ENCODE measurements at regions of chr7 and their contacts with region 1.

Region 1: DNA sequence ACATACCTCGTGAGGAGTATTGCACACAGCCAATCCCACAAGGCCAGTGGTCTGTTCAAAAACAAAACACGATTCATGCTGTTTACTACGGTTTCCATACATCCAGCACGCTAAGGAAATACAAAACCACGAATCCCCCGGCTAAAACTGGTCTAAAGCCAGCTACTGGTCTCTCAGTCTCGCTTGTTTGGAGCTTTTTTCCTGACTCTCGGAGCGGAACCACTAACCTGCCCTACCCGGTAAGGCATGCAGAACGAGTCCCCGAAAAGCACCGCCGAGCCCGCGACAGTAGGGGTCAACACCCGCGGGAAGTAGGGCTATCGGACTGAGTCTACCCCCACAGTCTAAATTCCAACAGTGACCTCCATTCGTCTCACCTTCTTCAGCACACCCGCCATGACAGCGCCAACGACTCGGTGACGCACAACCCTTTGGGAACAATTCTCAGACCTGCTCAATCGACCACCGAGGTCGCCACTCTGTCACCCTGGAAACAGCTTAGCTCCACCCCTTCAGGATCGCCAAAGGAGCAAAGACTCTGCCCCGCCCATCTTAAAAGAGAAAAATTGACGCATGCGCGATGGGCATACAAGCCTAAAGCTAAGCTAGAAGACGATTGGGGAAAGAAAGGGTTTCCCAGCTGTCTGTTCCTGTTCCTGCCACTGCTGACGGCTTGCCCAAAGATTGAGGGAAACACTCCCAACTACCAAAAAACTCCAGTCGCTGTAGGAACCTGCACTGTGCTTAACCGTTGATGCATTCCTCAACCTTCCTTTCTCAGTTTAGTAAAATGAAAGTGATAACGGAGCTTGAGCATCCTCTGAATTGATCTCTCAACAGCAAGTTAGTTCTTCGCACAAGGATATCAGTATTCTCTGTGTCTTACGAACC is at the start of gene NDUFA5:
- DNase-seq: peak; percentile 90 to 100
- ATAC-seq: peak; percentile 97 to 100 (median 99)
- H3K4me3 ChIP-seq: peak within 1 kb of the TSS; percentile 61 to 92 (median 76)
- H3K27ac ChIP-seq: peak within 1 kb of the TSS; percentile 89 to 96 (median 92)
- H3K4me1 ChIP-seq: peaks cover 3 to 49% (median 39%) of the 10 kb centered on the region in 9 donors
- H3K27me3 ChIP-seq: no peaks in the 10 kb centered on the region
- CTCF ChIP-seq: no peak
- total RNA-seq, gene NDUFA5: 185 to 358 (median 281) TPM

Region 2: DNA sequence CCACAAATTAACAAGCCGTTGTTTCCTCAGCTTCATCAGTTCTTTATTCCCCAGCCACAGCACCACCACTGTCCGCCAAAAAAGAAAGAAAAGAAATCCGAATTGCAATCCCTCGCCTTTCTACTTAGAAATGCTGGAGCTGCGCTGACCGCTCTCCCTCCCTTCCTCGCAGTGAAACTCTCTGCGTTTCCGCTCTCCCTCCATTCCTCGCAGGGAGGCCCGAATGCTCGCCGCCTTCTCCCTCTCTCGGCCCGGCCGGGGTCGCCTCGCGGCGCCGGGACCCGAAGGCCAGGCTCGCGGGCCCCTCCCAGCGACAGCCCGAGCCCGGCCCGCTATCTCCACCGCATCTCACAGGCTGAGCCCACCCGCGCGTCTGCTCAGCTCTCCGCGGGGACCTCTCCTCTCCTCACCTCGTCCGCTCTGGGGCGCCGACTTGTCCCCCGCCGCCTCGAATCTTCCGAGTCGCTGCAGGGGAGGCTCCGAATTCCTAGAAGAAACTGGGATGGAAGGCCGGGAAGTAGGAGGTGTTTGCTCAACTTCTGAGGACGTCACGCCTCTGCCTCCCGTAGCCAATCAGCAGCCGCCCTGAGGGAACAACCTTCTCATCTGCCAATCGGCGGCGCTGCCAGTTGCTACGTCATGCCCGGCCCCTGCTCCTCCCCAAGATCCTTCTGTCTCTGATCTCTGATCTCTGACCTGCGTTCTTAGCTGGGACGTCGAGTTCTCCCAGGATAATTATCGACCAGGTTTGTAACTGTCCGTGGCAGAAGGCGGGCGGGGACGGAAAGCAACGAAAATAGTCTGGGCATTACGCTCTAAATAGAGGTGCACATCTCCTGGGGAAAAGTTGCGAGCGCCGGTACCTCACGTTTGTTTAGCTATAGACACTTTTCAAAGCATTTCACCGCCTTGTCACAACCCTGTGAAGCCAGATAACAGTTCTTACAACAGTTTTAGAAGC is 1413.6 kb before region 1 on chr7 and contains the start of gene AASS:
- intact Hi-C with region 1: loop called in 1 of 10 experiments (anchors 5 kb)
- DNase-seq: peak; percentile 98
- ATAC-seq: peak; percentile 98 to 100 (median 99)
- H3K4me3 ChIP-seq: peak within 1 kb of the TSS; percentile 58 to 96 (median 84)
- H3K27ac ChIP-seq: peak within 1 kb of the TSS; percentile 71 to 96 (median 92)
- H3K4me1 ChIP-seq: peaks cover 0 to 35% (median 19%) of the 10 kb centered on the region in 9 donors
- H3K27me3 ChIP-seq: peaks cover 0 to 10% (median 0%) of the 10 kb centered on the region in 7 donors
- CTCF ChIP-seq: peak in 1 of 9 donors; percentile 26
- total RNA-seq, gene AASS: 14.6 to 48.1 (median 29.1) TPM

Region 3: DNA sequence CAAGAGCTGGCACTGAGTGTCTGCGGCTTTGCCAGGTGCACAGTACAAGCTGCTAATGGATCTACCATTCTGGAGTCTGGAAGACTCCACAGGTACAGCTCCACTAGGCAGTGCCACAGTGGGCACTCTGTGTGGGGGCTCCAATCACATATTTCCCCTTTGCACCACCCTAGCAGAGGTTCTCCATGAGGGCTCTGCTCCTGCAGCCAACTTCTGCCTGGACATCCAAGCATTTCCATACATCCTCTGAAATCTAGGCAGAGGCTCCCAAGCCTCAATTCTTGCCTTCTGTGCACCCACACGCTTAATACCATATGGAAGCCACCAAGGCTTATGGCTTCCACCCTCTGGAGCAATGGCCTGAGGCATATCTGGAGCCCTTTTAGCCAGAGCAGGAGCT is 52.4 kb before region 1 on chr7:
- intact Hi-C with region 1: no loop called
- DNase-seq: no peak
- ATAC-seq: no peak
- H3K4me3 ChIP-seq: no peak overlapping the region
- H3K27ac ChIP-seq: no peak overlapping the region
- H3K4me1 ChIP-seq: no peaks in the 10 kb centered on the region
- H3K27me3 ChIP-seq: no peaks in the 10 kb centered on the region
- CTCF ChIP-seq: no peak

Region 4: GRCh38 chr7:123534383-123535260 is 23.0 kb before region 1 on chr7 and contains the start of gene IQUB:
- intact Hi-C with region 1: loop called in 4 of 10 experiments (anchors 1 to 2 kb)
- DNase-seq: peak; percentile 99
- ATAC-seq: peak; percentile 95 to 99 (median 96)
- H3K4me3 ChIP-seq: peak within 1 kb of the TSS; percentile 37 to 76 (median 64)
- H3K27ac ChIP-seq: peak within 1 kb of the TSS in 9 of 10 donors; percentile 65 to 90 (median 82)
- H3K4me1 ChIP-seq: peaks cover 0 to 31% (median 20%) of the 10 kb centered on the region in 9 donors
- H3K27me3 ChIP-seq: peaks cover 0 to 45% (median 0%) of the 10 kb centered on the region in 7 donors
- CTCF ChIP-seq: no peak
- total RNA-seq, gene IQUB: 0.17 to 0.83 (median 0.53) TPM

Region 5: DNA sequence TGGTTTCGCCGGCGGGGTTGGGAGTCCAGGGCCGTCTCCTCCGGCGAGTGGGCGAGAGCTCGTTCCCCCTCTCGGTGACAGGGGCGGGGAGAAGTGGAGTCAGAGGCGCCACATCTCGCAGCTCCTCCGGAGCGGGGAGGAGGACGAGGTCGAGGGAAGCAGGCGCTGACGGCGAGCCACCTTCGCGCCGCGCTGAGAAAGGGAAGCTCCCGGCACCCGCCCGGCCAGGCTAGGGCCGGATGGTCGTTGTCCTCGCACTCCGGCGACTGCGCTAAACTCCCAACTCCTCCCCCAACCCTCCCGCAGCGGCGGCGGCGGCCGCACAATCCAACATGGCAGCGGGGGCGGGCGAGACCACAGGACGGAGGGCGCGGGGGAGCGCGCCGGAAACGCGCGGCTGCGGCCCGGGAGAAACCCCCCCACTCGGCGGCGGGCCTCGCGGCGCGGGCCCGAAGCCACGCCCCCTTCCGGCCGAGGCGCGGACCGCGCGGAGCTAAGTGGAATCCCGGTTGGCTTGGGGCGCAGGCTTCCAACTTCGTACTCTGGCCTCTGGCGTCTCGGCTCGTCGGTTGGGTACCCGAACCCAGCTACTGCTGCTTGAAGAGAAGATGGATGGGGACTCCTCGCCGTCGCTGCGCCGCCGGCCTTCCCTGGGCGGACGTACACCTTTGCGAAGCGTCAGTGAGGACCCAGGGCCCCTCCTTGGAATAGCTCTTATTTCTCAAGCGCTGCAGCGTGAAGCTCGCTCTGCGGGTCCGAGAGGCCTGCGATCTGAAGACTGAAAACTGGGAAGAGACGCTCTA is 191.3 kb after region 1 on chr7 and contains the start of gene WASL:
- intact Hi-C with region 1: loop called in 3 of 10 experiments (anchors 2 to 10 kb)
- DNase-seq: peak; percentile 91 to 95
- ATAC-seq: peak; percentile 94 to 98 (median 96)
- H3K4me3 ChIP-seq: peak within 1 kb of the TSS; percentile 80 to 95 (median 89)
- H3K27ac ChIP-seq: peak within 1 kb of the TSS; percentile 94 to 99 (median 98)
- H3K4me1 ChIP-seq: peaks cover 0 to 73% (median 59%) of the 10 kb centered on the region in 9 donors
- H3K27me3 ChIP-seq: no peaks in the 10 kb centered on the region
- CTCF ChIP-seq: peak in 5 of 9 donors; percentile 5 to 33 (median 19)
- total RNA-seq, gene WASL: 21.6 to 30.0 (median 25.2) TPM